Activated CD4-positive, alpha-beta memory T cell treated with anti-CD3 and anti-CD28 coated beads for 36 hours (primary cell): ENCODE measurements at regions of chr3 and their contacts with region 1.

Region 1: DNA sequence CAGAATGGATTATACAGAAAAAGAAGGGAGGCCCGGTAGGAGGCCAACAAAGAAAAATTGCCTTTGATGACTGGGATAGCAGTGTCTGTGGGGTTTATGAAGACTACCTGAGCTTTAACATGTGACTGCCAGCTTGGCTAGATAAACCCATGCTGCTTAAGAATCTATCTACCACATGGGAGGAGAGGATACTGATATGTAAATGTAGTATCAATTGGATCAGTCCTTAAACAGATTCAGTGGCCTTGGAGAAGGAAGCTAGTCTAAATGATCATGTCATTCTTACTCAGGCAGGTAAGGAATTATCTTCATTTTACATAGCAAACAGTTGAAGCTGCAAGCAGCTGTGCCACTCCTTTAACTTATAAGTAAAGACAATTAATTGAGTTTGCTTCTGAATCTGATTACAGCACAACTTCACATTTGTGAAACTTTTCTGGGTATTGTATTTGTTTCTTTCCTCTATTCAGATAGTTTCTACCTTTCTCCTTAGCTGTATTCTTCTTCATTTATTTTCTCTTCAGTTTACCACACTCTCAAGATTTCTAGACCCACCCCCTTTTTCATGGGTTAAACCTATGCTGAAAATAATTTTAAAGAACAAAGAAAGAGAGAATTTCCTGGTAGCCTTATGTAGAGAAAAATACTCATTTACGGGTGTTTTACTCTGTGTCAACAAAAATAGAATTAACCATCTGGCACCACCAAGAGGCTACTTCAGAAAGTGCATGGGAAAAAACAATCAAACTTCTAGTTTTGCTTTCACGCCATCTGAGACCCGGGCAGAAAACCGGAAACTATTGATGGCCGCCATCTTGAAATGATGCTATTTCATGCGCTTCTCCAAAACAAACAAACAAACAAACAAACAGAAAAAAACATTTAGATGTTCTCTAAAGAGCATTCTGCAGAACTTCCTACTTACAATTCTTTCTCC is 49.8 kb upstream of the SYNPR start:
- DNase-seq: no peak
- H3K4me3 Mint-ChIP-seq: no peak overlapping the region
- H3K27ac Mint-ChIP-seq: no peak overlapping the region
- H3K4me1 Mint-ChIP-seq: no peaks in the 10 kb centered on the region
- H3K27me3 Mint-ChIP-seq: no peaks in the 10 kb centered on the region

Region 2: GRCh38 chr3:62622553-62623193 is 605.7 kb before region 1 on chr3:
- CTCF ChIA-PET with region 1: no interaction called
- POLR2A ChIA-PET with region 1: no interaction called
- intact Hi-C with region 1: loop called (anchors 5 kb)
- DNase-seq: no peak
- H3K4me3 Mint-ChIP-seq: no peak overlapping the region
- H3K27ac Mint-ChIP-seq: no peak overlapping the region
- H3K4me1 Mint-ChIP-seq: no peaks in the 10 kb centered on the region
- H3K27me3 Mint-ChIP-seq: peaks cover 3% of the 10 kb centered on the region

Region 3: GRCh38 chr3:62665598-62666437 is 562.5 kb before region 1 on chr3:
- CTCF ChIA-PET with region 1: interaction called, 3 read pairs
- POLR2A ChIA-PET with region 1: no interaction called
- intact Hi-C with region 1: loop called (anchors 5 kb)
- DNase-seq: peak; percentile 52
- H3K4me3 Mint-ChIP-seq: no peak overlapping the region
- H3K27ac Mint-ChIP-seq: no peak overlapping the region
- H3K4me1 Mint-ChIP-seq: no peaks in the 10 kb centered on the region
- H3K27me3 Mint-ChIP-seq: peaks cover 1% of the 10 kb centered on the region